Gastrocnemius medialis (tissue), 4 donors: ENCODE measurements at regions of chr2 and their contacts with region 1.

Region 1: GRCh38 chr2:88165332-88166003 is 4.7 kb upstream of the THNSL2 start:
- DNase-seq: peak in 1 of 2 donors; percentile 52
- ATAC-seq: peak; percentile 89 to 97
- H3K4me3 ChIP-seq: no peak overlapping the region
- H3K27ac ChIP-seq: peak overlapping the region; percentile 88 to 98 (median 96)
- H3K4me1 ChIP-seq: peaks cover 31 to 36% of the 10 kb centered on the region in 2 donors
- H3K27me3 ChIP-seq: no peaks in the 10 kb centered on the region
- CTCF ChIP-seq: no peak
- POLR2A ChIP-seq: peak; percentile 53 to 69

Region 2: GRCh38 chr2:88016086-88016959 is 149.1 kb before region 1 on chr2 and contains the start of gene RNU2-63P:
- in situ Hi-C with region 1: no loop called
- intact Hi-C with region 1: loop called (anchors 5 kb)
- DNase-seq: peak; percentile 13 to 56
- ATAC-seq: peak; percentile 87 to 97
- H3K4me3 ChIP-seq: peak within 1 kb of the TSS; percentile 63 to 72 (median 66)
- H3K27ac ChIP-seq: peak within 1 kb of the TSS in 3 of 4 donors; percentile 6 to 67 (median 67)
- H3K4me1 ChIP-seq: no peaks in the 10 kb centered on the region
- H3K27me3 ChIP-seq: no peaks in the 10 kb centered on the region
- CTCF ChIP-seq: no peak
- POLR2A ChIP-seq: peak; percentile 56 to 83
- total RNA-seq, gene RNU2-63P: not detected

Region 3: GRCh38 chr2:88258208-88258607 is 92.7 kb after region 1 on chr2:
- in situ Hi-C with region 1: no loop called
- intact Hi-C with region 1: no loop called
- DNase-seq: no peak
- ATAC-seq: no peak
- H3K4me3 ChIP-seq: no peak overlapping the region
- H3K27ac ChIP-seq: no peak overlapping the region
- H3K4me1 ChIP-seq: no peaks in the 10 kb centered on the region
- H3K27me3 ChIP-seq: peaks cover 0 to 7% (median 6%) of the 10 kb centered on the region in 3 donors
- CTCF ChIP-seq: no peak
- POLR2A ChIP-seq: no peak

Region 4: DNA sequence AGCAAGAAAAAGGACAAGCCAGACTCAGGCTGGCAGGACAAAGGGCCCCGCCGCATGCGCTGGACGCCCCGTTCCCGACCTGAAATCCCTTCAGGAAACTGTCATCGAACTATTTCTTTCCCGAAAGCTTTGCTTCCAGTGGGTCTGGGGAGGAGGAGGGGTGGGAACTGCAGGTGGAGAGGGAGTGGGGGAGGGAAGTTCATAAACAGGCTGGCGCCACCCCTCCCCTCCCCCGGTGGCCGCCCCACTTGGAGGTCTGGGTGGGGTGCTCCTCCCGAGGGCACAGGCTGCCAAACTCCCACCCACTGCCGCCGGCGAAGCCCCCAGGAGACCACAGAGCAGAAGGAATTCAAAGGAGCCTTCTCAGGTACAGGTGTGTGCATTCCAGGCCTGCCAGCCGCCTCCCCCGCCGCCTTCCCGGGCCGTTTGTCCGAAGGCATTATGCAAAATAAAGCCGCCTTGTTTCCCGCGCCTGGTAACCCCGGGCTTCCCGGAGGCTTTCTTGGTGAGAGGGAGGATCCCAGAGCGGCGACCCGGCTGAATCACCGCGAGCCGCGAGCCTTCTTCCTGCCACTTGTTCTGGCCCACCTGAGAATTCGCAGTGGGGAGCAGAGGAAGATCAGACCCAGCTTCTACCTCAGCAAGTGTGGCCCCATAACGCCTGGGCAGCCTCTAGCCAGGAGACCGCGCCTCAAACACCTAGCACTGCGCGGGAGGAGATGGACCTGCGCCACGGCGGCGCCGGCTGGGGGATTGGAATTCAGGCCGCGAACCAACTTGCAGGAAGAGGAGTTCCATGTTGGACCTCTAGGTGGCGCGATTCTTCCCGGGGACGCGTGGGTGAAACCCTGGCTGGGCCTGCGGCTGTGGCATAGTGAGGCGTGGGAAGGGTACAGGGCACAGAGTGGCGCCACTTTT is 185.1 kb after region 1 on chr2:
- in situ Hi-C with region 1: no loop called
- intact Hi-C with region 1: no loop called
- DNase-seq: no peak
- ATAC-seq: no peak
- H3K4me3 ChIP-seq: no peak overlapping the region
- H3K27ac ChIP-seq: no peak overlapping the region
- H3K4me1 ChIP-seq: no peaks in the 10 kb centered on the region
- H3K27me3 ChIP-seq: peaks cover 22 to 29% (median 22%) of the 10 kb centered on the region in 3 donors
- CTCF ChIP-seq: peak in 2 of 5 experiments; percentile 20 to 44
- POLR2A ChIP-seq: no peak